ENCODE measurements at regions of chr10 and their contacts with region 1.

Region 1: DNA sequence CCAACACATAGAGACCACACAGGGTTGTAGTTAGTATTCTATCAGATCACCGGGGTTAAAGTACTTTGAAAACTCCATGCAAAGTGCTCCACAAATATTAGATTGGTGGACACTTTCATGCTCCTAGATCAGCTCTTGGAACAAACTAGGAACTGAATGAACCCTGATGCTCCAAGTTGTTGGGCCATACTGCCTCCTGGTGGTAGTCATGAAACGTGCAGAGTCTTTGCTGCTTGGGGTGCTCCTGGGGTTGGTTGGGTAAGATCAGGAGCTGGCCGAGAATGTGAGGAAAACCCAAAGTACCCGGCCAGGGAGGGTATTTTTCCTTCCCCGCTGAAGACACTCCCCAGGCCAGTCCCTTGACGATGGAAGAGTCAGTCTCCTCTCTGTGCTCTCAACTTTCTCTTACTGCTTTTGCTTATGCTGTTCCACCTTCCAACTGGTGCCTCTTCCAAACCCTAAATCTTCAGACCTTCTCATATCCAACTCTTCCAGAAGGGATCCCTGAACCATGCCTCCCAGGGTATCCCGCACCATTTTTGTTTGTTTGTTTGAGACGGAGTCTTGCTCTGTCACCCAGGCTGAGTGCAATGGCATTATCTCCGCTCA is 920 bp upstream of the RPEL1 start:
- DNase-seq: peak; percentile 83
- H3K4me3 ChIP-seq: no peak overlapping the region
- H3K27ac ChIP-seq: no peak overlapping the region
- H3K4me1 ChIP-seq: peaks cover 8 to 34% (median 19%) of the 10 kb centered on the region in 4 donors
- H3K27me3 ChIP-seq: no peaks in the 10 kb centered on the region
- CTCF ChIP-seq: peak; percentile 82 to 91 (median 86)
- EP300 ChIP-seq: no peak
- POLR2A ChIP-seq: no peak

Region 2: DNA sequence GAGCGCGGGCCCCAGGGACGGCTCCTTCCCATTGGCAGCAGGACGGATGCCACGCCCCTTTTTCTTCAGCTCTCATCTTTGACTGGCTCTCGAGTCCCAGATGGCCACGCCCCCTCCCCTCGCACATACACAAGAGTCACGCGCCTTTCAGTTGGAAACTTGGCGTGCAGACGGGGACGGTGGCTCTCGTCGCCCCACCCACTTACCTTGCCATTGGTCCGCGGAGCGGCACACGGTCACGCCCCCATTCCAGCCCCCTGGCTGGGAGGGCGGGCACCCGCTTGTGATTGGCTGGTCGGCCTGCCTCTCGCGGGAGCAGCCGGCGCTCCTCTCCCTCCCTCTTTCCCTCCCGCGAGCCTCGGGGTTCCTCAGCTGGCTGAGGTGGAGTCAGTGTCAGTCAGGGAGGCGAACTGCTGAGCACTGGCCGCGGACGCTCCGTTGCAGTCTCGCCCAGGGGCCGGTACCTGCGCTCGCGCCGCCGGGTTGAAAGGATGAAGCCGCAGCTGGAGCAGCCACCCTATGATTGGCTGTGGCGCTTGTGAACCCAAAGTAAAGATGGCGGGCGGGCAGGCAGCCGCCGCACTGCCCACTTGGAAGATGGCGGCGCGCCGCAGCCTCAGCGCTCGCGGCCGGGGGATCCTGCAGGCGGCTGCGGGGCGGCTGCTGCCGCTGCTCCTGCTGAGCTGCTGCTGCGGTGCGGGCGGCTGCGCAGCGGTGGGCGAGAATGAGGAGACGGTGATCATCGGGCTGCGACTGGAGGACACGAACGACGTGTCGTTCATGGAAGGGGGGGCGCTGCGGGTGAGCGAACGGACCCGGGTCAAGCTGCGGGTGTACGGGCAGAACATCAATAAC is 326.6 kb before region 1 on chr10 and contains the start of gene CNNM2:
- in situ Hi-C with region 1: loop called (anchors 5 to 25 kb)
- intact Hi-C with region 1: loop called (anchors 5 kb)
- DNase-seq: peak; percentile 100
- H3K4me3 ChIP-seq: peak within 1 kb of the TSS; percentile 71 to 94 (median 88)
- H3K27ac ChIP-seq: peak within 1 kb of the TSS; percentile 86 to 92 (median 92)
- H3K4me1 ChIP-seq: peaks cover 5 to 49% (median 34%) of the 10 kb centered on the region in 4 donors
- H3K27me3 ChIP-seq: no peaks in the 10 kb centered on the region
- CTCF ChIP-seq: peak in 1 of 5 experiments; percentile 10
- EP300 ChIP-seq: no peak
- POLR2A ChIP-seq: peak; percentile 63
- total RNA-seq, gene CNNM2: 48.0 to 144 (median 100) TPM

Region 3: DNA sequence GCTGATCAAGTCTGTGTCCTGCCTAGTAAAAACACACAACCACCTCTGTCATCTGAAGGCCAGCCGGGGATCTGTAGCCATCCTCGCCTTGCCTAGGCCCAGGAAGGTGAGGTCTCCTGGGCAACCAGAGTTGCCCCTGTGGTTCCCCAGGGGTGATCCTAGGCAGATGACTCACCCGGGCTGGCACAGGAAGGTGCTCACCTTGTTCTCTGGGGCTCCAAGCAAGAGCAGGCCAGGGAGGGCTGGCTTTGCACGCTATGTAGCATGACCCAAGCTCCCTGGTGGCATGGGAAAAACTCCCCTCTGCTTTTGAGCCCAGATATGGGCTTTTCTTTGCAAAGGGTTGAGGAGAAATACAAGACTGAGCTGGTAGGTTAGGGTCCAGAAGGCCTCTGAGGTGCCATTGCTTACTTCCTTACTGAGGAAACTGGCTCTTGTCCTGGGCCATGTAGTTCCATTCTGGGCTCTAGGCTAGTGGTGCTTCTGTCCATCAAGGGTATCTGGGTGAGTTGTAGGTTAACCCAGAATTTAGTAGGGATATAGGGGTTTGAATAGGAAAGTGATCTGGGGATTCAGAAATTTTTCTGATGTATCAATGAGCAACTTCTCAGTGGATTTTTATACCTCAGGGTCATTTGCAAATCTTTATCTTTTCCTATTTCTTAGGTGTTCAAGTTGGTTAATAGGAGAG is 163.7 kb before region 1 on chr10:
- in situ Hi-C with region 1: loop called in 1 of 4 experiments (anchors 25 kb)
- intact Hi-C with region 1: no loop called
- DNase-seq: no peak
- H3K4me3 ChIP-seq: no peak overlapping the region
- H3K27ac ChIP-seq: no peak overlapping the region
- H3K4me1 ChIP-seq: no peaks in the 10 kb centered on the region
- H3K27me3 ChIP-seq: no peaks in the 10 kb centered on the region
- CTCF ChIP-seq: no peak
- EP300 ChIP-seq: no peak
- POLR2A ChIP-seq: no peak

Region 4: DNA sequence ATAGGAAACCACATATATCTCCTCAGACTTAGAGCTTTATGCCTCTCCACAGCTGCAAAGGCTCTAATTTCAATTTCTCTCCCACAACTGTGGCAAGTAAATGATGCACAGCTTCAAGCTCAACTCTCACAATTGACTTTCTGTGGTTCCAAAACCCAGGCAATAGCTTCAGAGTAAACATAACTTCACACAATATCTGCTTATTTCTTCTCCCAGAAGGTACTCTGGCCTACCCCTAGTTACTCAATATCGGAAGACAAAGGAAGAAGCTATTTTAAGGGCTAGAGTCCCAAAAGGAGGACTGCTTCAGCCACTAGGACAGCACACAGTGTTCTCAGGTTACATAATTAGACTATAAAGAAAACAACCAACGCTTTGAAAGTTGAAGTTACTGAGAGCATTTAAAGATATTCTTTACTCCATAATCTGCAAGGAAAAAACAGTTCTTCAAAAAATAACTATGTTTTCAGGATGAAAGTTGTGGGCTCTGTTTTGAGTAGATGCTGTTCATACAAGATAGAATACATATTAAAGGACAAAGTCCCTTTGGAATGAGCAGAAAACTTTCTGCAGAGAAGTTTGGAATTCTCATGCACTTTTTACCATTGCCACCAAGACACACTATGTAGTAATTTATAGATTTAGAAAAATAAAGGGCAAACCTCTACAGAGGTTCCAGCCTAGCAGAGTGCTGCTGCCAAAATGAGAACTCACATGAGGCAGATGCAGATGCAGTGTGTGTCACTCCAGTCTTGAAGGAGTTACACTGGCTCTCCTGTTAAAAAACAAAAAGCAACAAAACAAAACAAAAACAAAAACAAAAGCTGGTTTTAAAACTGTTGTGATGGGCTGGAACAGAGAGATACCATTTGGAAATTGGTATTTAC is 133.5 kb before region 1 on chr10:
- in situ Hi-C with region 1: loop called in 1 of 4 experiments (anchors 25 kb)
- intact Hi-C with region 1: no loop called
- DNase-seq: no peak
- H3K4me3 ChIP-seq: no peak overlapping the region
- H3K27ac ChIP-seq: peak overlapping the region; percentile 52 to 79 (median 64)
- H3K4me1 ChIP-seq: peaks cover 12 to 25% (median 15%) of the 10 kb centered on the region in 4 donors
- H3K27me3 ChIP-seq: no peaks in the 10 kb centered on the region
- CTCF ChIP-seq: no peak
- EP300 ChIP-seq: no peak
- POLR2A ChIP-seq: no peak

Measured in transverse colon (tissue), 4 donors.